A673 (cell line): ENCODE measurements at regions of chr4 and their contacts with region 1.

Region 1: GRCh38 chr4:101081695-101082369 is 265.5 kb downstream of the PPP3CA start:
- DNase-seq: peak; percentile 24
- H3K4me3 ChIP-seq: no peak overlapping the region
- H3K27ac ChIP-seq: no peak overlapping the region
- H3K4me1 ChIP-seq: no peaks in the 10 kb centered on the region
- H3K27me3 ChIP-seq: no peaks in the 10 kb centered on the region
- CTCF ChIP-seq: no peak

Region 2: DNA sequence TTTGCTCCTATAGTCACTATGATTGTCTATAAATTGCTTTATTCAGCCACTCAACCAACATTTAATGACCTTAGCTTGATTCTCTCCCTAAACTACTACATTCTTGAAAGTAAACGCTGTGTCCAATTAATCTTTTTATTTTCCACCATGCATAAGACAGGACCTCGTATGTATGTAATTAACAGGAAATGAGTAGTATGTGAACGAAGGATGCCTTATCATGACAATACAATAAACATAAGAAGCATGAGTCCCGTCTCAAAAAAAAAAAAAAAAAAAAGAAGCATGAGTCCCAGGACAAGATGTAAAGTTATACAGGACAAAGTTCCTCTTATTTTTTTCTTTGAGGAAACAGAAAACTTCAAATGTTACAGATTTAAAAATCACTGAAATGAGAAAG is 172.9 kb after region 1 on chr4:
- CTCF ChIA-PET with region 1: no interaction called
- POLR2A ChIA-PET with region 1: interaction called, 21 read pairs
- intact Hi-C with region 1: no loop called
- DNase-seq: no peak
- H3K4me3 ChIP-seq: no peak overlapping the region
- H3K27ac ChIP-seq: no peak overlapping the region
- H3K4me1 ChIP-seq: peaks cover 43% of the 10 kb centered on the region
- H3K27me3 ChIP-seq: no peaks in the 10 kb centered on the region
- CTCF ChIP-seq: no peak